ENCODE measurements at regions of chr12 and their contacts with region 1.

Region 1: GRCh38 chr12:53476769-53477209 is 22.5 kb downstream of the MAP3K12 start:
- DNase-seq: no peak
- H3K4me3 ChIP-seq: no peak overlapping the region
- CTCF ChIP-seq: no peak

Region 2: DNA sequence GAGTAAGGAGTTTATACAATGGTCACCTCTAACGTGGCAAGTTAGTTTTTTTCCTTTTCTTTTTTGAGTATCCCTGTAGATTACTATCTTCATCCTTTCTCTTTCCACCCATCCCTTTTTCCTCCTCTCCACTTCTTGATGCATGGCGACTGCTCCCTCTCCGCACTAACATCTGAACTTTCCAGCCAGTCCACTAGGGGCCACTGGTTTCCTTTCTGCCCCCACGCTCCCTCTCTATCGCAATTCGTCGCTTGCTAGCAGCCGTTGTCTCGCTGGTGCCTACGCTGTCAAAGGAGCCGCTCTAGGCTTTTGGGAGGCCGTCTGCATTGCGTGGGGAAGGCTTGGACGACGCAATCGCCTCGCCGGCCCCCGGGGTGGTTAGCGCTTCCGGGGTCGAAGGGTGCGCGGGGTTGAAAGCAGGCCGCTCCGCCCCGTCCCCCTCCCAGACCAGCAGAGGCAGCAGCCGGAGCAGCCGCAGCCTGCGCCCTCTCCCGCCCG is 25.1 kb before region 1 on chr12 and contains the start of gene PCBP2:
- CTCF ChIA-PET with region 1: interaction called, 81 read pairs
- POLR2A ChIA-PET with region 1: interaction called, 3 read pairs
- DNase-seq: peak; percentile 97
- H3K4me3 ChIP-seq: peak within 1 kb of the TSS; percentile 88
- CTCF ChIP-seq: peak; percentile 93

Region 3: DNA sequence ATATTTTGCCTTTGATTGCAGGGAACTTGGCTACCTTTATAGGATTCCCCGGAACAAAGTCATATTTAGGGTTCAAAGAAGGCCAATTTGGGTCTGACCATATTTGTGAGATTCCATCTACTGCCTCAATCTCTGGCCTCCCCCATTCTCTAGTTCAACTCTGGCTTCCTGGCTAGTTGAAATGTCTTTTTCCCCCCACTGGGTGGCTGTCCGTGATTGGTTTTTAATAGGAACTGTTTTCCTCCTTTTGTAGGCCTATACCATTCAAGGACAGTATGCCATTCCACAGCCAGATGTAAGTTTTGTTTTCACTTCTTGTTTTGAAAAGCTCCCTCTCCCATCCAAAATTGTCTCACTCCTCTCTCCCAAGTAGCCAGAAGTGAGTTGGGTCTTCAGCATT is 11.1 kb before region 1 on chr12:
- CTCF ChIA-PET with region 1: interaction called, 11 read pairs
- POLR2A ChIA-PET with region 1: interaction called, 4 read pairs
- DNase-seq: no peak
- H3K4me3 ChIP-seq: no peak overlapping the region
- CTCF ChIP-seq: no peak